Endothelial cell of umbilical vein (primary cell): ENCODE measurements at regions of chr10 and their contacts with region 1.

Region 1: DNA sequence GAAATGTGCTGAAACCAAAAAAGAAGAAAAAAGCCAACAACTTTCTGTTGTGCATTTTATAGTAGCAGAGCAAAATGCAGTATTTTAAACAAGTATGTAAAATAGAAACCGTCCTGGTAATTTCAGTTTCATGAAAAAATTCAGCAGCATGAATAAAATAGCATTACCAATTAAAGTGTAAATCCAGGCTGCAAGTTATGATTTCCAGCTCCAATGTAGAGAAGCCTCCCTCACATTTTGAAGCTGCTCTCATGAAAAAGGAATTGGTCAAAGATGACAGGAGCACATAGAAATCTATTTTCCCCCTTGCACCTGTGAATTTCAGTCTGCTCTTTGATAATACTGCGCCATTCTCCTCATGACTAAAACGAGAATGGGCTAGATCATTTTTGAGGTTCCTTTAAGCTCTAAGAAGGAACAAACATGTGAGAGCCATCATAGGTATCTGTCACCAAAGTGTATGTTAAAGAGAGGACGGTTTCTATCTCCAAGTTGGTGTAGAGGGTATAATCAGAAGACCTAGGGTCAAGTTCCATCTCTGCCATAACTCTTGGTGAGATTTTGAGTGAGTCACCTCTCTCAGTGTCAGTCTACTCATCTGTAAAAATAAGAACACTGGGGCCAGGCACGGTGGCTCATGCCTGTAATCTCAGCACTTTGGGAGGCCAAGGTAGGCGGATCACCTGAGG is 107.5 kb downstream of the MTPAP start:
- DNase-seq: no peak
- H3K4me3 ChIP-seq: no peak overlapping the region
- H3K27ac ChIP-seq: no peak overlapping the region
- H3K4me1 ChIP-seq: peaks cover 2% of the 10 kb centered on the region
- H3K27me3 ChIP-seq: no peaks in the 10 kb centered on the region
- CTCF ChIP-seq: no peak
- POLR2A ChIP-seq: no peak

Region 2: GRCh38 chr10:30027057-30028005 is 214.2 kb before region 1 on chr10:
- CTCF ChIA-PET with region 1: interaction called, 37 read pairs
- POLR2A ChIA-PET with region 1: no interaction called
- dilution Hi-C with region 1: no loop called
- intact Hi-C with region 1: loop called (anchors 1 kb)
- DNase-seq: peak; percentile 73
- H3K4me3 ChIP-seq: no peak overlapping the region
- H3K27ac ChIP-seq: peak overlapping the region; percentile 78
- H3K4me1 ChIP-seq: peaks cover 44% of the 10 kb centered on the region
- H3K27me3 ChIP-seq: no peaks in the 10 kb centered on the region
- CTCF ChIP-seq: peak; percentile 14
- POLR2A ChIP-seq: peak; percentile 40

Region 3: DNA sequence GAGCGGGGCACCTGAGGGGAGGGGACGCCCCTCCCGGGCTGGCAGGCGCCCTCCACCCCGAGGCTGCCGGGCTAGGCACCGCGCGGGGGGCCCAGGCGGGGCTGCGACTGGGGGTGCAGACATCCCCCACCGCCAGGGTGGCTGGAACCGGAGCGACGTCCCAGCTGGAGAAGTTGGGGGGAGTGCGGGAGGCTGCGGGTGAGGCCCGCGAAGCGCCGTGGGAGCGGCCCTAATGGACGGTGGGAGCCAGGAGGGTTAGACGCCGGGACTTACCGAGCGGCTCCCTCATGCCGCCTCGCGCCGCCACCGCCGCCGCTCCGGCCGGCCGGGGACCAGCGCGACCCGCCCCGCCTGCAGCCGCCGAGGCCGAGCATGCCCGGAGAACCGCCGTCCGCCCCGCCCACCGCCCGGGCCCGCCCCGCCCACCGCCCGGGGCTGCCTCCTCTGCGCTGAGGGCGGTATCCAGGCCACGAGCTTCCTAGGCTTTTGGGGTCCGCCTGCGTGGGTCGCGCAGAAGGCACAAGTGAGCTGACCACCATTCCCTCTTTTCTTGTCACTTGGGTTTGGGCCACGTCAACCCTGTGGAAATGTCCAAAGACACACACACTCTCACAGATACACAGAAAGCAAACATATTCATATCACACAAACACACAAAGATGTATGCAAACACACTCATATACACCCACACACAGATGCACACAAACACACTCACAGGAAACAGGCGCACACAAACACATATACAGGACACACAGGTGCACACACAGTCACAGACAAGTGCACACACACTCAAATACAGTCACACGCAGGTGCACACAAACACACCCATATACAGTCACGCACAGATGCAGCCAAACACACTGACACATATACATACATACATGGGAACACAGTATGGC is 182.1 kb before region 1 on chr10 and contains the start of gene JCAD:
- CTCF ChIA-PET with region 1: interaction called, 22 read pairs
- POLR2A ChIA-PET with region 1: no interaction called
- dilution Hi-C with region 1: no loop called
- intact Hi-C with region 1: loop called (anchors 1 kb)
- DNase-seq: peak; percentile 69
- H3K4me3 ChIP-seq: peak within 1 kb of the TSS; percentile 62 to 69 (median 68)
- H3K27ac ChIP-seq: peak within 1 kb of the TSS; percentile 69
- H3K4me1 ChIP-seq: peaks cover 59% of the 10 kb centered on the region
- H3K27me3 ChIP-seq: no peaks in the 10 kb centered on the region
- CTCF ChIP-seq: no peak
- POLR2A ChIP-seq: peak; percentile 55
- total RNA-seq, gene JCAD: 76.3 and 79.7 TPM in 2 replicates

Region 4: GRCh38 chr10:30111340-30112022 is 130.1 kb before region 1 on chr10:
- CTCF ChIA-PET with region 1: interaction called, 10 read pairs
- POLR2A ChIA-PET with region 1: no interaction called
- dilution Hi-C with region 1: no loop called
- intact Hi-C with region 1: no loop called
- DNase-seq: peak; percentile 96
- H3K4me3 ChIP-seq: no peak overlapping the region
- H3K27ac ChIP-seq: peak overlapping the region; percentile 64
- H3K4me1 ChIP-seq: peaks cover 29% of the 10 kb centered on the region
- H3K27me3 ChIP-seq: no peaks in the 10 kb centered on the region
- CTCF ChIP-seq: no peak
- POLR2A ChIP-seq: no peak

Region 5: DNA sequence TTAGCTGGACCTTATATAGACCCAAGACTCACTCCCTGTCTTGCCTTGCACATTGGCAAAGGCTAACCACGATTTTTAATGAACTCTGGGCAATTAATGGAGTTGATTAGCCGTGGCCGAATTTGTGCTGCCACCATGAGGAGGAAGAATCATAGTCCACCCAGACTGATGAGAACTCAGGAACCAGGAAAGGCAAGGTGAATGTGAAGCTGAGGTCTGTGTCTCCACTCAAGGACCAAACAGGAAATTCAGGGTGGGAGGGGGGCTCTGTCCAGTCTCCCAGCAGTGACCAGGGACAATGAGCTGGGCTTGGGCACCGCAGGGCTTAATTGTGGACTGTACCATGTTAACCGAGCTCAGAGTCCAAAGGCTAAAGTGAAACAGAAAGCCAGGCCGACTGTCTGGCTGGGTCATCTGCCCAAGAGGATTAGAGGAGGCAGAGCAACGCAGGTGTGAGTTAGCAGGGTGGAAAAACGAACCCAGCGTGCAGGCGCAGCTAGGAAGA is 55.1 kb before region 1 on chr10:
- CTCF ChIA-PET with region 1: interaction called, 33 read pairs
- POLR2A ChIA-PET with region 1: no interaction called
- dilution Hi-C with region 1: no loop called
- intact Hi-C with region 1: loop called (anchors 1 kb)
- DNase-seq: peak; percentile 60
- H3K4me3 ChIP-seq: no peak overlapping the region
- H3K27ac ChIP-seq: peak overlapping the region; percentile 79
- H3K4me1 ChIP-seq: peaks cover 50% of the 10 kb centered on the region
- H3K27me3 ChIP-seq: no peaks in the 10 kb centered on the region
- CTCF ChIP-seq: peak; percentile 7 to 17
- POLR2A ChIP-seq: no peak